ENCODE measurements at regions of chr11 and their contacts with region 1.

Region 1: DNA sequence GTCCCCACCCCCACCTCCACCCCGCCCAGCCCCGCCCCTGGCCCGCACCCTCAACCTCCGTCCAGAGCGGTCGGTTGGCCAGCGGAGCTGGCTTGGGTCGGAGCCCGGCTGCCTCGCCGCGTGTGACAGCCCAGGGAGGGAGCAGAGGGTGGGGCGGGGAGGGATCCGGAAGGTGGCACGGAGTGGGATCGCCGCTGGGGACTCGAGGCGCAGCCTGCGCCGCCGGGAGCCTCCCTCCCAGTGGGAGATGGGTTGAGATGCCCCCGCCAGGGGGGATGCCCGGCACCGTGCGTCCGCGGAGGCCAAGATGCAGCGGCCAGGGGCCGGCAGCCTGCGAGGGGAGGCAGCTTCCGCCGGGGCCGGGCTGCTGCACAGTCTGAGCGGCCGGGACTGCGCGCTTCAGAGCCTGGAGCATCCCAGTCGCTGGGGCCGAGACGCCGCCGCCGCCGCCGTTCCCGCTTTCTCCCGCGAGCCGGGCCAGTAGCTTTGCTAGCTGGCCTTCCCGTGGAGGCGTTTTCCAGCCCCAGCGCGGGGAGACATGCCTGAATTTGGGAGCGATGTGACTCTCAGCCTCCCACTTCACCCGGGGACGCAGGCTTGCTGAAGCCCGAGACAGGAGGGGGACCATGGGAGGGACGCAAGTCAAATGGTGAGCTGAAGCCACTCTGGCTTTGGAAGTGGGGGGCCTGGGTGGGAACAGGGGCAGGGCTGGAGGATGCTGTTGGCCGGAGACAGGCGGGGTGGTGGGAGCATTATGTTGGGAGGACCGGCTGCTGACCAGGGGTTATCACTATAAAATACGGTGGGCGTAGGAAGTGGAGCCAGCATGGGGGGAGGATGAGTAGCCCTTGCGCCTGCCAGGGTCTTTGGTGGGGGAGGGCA is 40.2 kb downstream of the DIXDC1 start:
- DNase-seq: peak; percentile 26 to 89
- H3K4me3 ChIP-seq: peak overlapping the region; percentile 58 to 97
- H3K27ac ChIP-seq: peak overlapping the region; percentile 92 to 99
- H3K4me1 ChIP-seq: peaks cover 3 to 25% of the 10 kb centered on the region in 2 donors
- H3K27me3 ChIP-seq: no peaks in the 10 kb centered on the region
- CTCF ChIP-seq: no peak

Region 2: GRCh38 chr11:111878849-111879636 is 98.3 kb before region 1 on chr11 and contains the starts of genes CFAP68 and FDXACB1:
- intact Hi-C with region 1: loop called (anchors 1 kb)
- DNase-seq: peak; percentile 89 to 99
- H3K4me3 ChIP-seq: peak within 1 kb of the TSS; percentile 71 to 74
- H3K27ac ChIP-seq: peak within 1 kb of the TSS; percentile 90 to 97
- H3K4me1 ChIP-seq: peaks cover 0 to 11% of the 10 kb centered on the region in 2 donors
- H3K27me3 ChIP-seq: no peaks in the 10 kb centered on the region
- CTCF ChIP-seq: peak; percentile 97 to 98 (median 98)
- total RNA-seq, gene CFAP68: not detected
- total RNA-seq, gene FDXACB1: 0.53 TPM

Region 3: GRCh38 chr11:111932611-111932950 is 44.8 kb before region 1 on chr11:
- intact Hi-C with region 1: loop called (anchors 1 kb)
- DNase-seq: no peak
- H3K4me3 ChIP-seq: no peak overlapping the region
- H3K27ac ChIP-seq: no peak overlapping the region
- H3K4me1 ChIP-seq: peaks cover 6 to 19% of the 10 kb centered on the region in 2 donors
- H3K27me3 ChIP-seq: no peaks in the 10 kb centered on the region
- CTCF ChIP-seq: no peak

Region 4: DNA sequence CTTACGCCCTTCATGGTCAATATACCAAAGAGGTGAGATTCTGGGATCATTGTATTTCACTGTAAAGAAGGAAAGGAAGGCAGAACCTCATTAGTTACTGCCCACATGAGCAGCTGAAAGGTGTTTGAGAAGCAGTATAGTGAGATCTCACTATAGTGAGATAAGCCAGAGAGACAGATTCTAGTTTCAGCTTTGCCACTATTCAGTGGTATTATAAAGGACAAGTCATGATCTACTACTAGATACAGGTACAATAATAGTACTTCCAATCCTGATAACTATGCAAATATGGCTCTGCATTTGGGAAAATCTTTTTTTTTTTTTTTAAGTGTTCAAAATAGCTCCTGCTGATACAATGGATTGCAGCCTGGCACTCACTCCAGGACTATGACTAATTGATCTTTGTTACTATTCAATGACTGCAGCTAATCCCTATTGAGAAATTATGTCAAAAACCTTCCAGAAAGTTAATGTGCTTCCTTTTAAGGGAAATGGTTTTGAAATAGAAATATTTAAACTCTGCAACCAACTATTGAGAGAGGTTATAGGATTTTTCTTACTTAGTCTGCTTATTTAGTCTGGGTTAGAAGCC is 39.5 kb after region 1 on chr11:
- intact Hi-C with region 1: loop called (anchors 2 kb)
- DNase-seq: peak in 1 of 2 donors; percentile 74
- H3K4me3 ChIP-seq: no peak overlapping the region
- H3K27ac ChIP-seq: peak overlapping the region; percentile 83 to 85
- H3K4me1 ChIP-seq: peaks cover 0 to 17% of the 10 kb centered on the region in 2 donors
- H3K27me3 ChIP-seq: no peaks in the 10 kb centered on the region
- CTCF ChIP-seq: no peak